ENCODE measurements at regions of chr13 and their contacts with region 1.

Region 1: GRCh38 chr13:58461217-58461616 is 829.7 kb downstream of the PCDH17 start:
- DNase-seq: no peak
- ATAC-seq: no peak
- H3K4me3 Mint-ChIP-seq: no peak overlapping the region
- H3K27ac Mint-ChIP-seq: no peak overlapping the region
- H3K4me1 Mint-ChIP-seq: no peaks in the 10 kb centered on the region
- H3K27me3 Mint-ChIP-seq: no peaks in the 10 kb centered on the region

Region 2: DNA sequence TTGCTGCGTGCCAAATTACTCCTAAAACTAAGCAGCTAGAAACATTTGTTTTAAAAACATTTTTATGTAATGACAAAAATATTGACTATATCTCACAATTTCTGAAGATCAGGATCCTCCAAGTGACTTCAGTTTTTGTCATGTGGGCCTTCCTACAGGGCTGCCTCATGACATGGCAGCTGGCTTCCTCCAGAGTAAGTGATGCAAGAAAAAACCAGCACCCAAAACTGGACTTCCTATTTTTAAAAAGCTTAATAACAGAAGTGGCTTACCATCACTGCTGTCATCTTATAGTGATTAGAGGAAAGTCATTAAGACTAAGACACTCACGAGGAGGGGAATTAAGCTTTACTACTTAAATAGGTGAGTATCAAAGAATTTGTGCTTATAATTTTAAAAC is 148.0 kb before region 1 on chr13:
- CTCF ChIA-PET with region 1: no interaction called
- POLR2A ChIA-PET with region 1: no interaction called
- intact Hi-C with region 1: no loop called
- DNase-seq: no peak
- ATAC-seq: no peak
- H3K4me3 Mint-ChIP-seq: no peak overlapping the region
- H3K27ac Mint-ChIP-seq: no peak overlapping the region
- H3K4me1 Mint-ChIP-seq: no peaks in the 10 kb centered on the region
- H3K27me3 Mint-ChIP-seq: no peaks in the 10 kb centered on the region

Region 3: DNA sequence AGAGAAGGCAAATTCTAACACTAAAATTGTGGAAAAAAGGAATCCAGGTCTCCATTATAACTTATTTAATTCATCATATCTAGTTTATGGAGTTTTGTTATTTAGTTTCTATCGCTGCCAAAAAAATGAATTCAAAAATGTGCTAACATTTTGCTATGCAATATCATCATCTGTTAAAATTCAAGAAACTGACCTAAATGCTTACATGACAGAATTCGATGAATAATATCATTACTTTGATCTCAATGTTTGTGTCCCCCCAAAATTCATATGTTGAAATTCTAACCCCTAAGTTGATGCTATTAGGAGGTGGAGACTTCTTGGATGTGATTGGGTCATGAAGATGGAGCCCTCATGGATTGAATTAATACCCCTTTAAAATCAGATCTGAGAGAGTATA is 54.7 kb before region 1 on chr13:
- CTCF ChIA-PET with region 1: no interaction called
- POLR2A ChIA-PET with region 1: no interaction called
- intact Hi-C with region 1: loop called in 1 of 2 experiments (anchors 5 kb)
- DNase-seq: no peak
- ATAC-seq: no peak
- H3K4me3 Mint-ChIP-seq: no peak overlapping the region
- H3K27ac Mint-ChIP-seq: no peak overlapping the region
- H3K4me1 Mint-ChIP-seq: no peaks in the 10 kb centered on the region
- H3K27me3 Mint-ChIP-seq: no peaks in the 10 kb centered on the region